B cell (primary cell): ENCODE measurements at regions of chr1 and their contacts with region 1.

Region 1: DNA sequence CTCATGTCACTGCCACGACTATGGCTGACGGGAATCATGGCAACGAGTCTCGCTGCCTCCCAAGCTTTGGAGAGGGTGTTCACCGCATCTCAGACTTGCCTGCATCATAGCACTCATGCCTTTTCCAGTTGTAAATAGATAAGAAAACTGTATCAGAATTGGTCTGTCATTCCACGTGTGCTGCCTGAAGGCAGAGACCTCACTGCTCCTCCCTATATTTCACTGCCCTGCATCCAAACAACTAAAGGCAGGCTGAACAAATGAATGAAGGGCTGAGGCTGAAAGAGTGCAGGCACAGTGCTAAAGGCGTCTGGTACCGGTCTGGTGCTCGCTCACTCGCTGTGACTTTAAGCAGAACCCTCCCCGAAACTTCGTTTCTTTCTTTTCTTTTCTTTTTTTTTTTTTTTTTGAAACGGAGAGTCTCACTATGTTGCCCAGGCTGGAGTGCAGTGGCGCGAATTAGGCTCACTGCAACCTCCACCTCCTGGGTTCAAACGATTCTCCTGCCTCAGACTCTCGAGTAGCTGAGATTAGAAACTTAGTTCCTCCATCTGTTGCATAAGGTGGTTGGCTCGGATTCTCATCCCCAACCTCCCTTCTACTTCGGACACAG is 542 bp downstream of the EIF2B3 start:
- DNase-seq: no peak
- ATAC-seq: no peak
- H3K4me3 ChIP-seq: peak overlapping the region; percentile 80 to 91 (median 87)
- H3K4me3 Mint-ChIP-seq: peak overlapping the region; percentile 100
- H3K27ac ChIP-seq: peak overlapping the region; percentile 34 to 66
- H3K27ac Mint-ChIP-seq: peak overlapping the region; percentile 86
- H3K4me1 ChIP-seq: peaks cover 9 to 19% of the 10 kb centered on the region in 2 donors
- H3K4me1 Mint-ChIP-seq: peaks cover 18% of the 10 kb centered on the region
- H3K27me3 ChIP-seq: no peaks in the 10 kb centered on the region
- H3K27me3 Mint-ChIP-seq: no peaks in the 10 kb centered on the region
- CTCF ChIP-seq: no peak

Region 2: GRCh38 chr1:44739361-44740178 is 246.3 kb before region 1 on chr1 and contains the start of gene KIF2C:
- CTCF ChIA-PET with region 1: no interaction called
- POLR2A ChIA-PET with region 1: interaction called, 4 read pairs
- intact Hi-C with region 1: loop called (anchors 1 kb)
- DNase-seq: peak; percentile 97
- ATAC-seq: peak; percentile 100
- H3K4me3 ChIP-seq: peak within 1 kb of the TSS; percentile 54 to 90 (median 87)
- H3K4me3 Mint-ChIP-seq: peak within 1 kb of the TSS; percentile 95
- H3K27ac ChIP-seq: peak within 1 kb of the TSS; percentile 60 to 85
- H3K27ac Mint-ChIP-seq: peak within 1 kb of the TSS; percentile 93
- H3K4me1 ChIP-seq: peaks cover 7 to 12% of the 10 kb centered on the region in 2 donors
- H3K4me1 Mint-ChIP-seq: peaks cover 17% of the 10 kb centered on the region
- H3K27me3 ChIP-seq: no peaks in the 10 kb centered on the region
- H3K27me3 Mint-ChIP-seq: no peaks in the 10 kb centered on the region
- CTCF ChIP-seq: no peak
- total RNA-seq, gene KIF2C: 0.25 and 0.51 TPM in 2 replicates